Activated T-helper 1 cell treated with anti-CD3 and anti-CD28 coated beads, Interleukin-12 subunit alpha, Interleukin-12 subunit beta, Interleukin-2, Interleukin-4 antibody, amounts not matched to agents 30 ng/mL and 10 ng/mL and 1 ng/mL, durations not matched to agents 14 hours and 24 hours and 36 hours (primary cell): ENCODE measurements at regions of chr16 and their contacts with region 1.

Region 1: DNA sequence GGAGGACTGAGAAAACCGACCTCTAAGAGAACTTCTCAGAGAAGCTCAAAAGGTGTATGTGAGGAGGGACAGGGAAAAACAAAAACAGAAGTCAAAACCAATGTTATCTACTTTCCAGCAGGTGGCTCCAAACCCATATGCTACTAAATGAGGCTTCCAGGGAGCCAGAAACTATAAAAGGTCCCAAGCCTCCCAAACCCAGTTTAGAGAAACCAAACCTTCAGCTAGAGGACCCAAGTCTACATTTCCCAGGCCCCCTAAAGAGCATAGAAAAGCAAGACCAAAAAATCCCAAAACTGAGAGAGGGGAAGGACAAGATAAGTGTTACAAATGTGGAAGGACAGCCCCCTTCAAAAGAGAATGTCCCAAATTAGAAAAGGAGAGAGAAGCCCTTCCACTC is 3.7 kb downstream of the HPR start:
- DNase-seq: no peak
- H3K4me3 Mint-ChIP-seq: no peak overlapping the region
- H3K27ac Mint-ChIP-seq: no peak overlapping the region
- H3K4me1 Mint-ChIP-seq: no peaks in the 10 kb centered on the region
- H3K27me3 Mint-ChIP-seq: peaks cover 3% of the 10 kb centered on the region

Region 2: GRCh38 chr16:71746442-71747046 is 320.2 kb before region 1 on chr16:
- intact Hi-C with region 1: no loop called
- DNase-seq: no peak
- H3K4me3 Mint-ChIP-seq: no peak overlapping the region
- H3K27ac Mint-ChIP-seq: no peak overlapping the region
- H3K4me1 Mint-ChIP-seq: peaks cover 5% of the 10 kb centered on the region
- H3K27me3 Mint-ChIP-seq: no peaks in the 10 kb centered on the region

Region 3: GRCh38 chr16:71867939-71868338 is 198.8 kb before region 1 on chr16:
- intact Hi-C with region 1: no loop called
- DNase-seq: no peak
- H3K4me3 Mint-ChIP-seq: no peak overlapping the region
- H3K27ac Mint-ChIP-seq: no peak overlapping the region
- H3K4me1 Mint-ChIP-seq: peaks cover 17% of the 10 kb centered on the region
- H3K27me3 Mint-ChIP-seq: peaks cover 2% of the 10 kb centered on the region

Region 4: GRCh38 chr16:72050769-72051464 is 15.8 kb before region 1 on chr16:
- intact Hi-C with region 1: loop called (anchors 1 kb)
- DNase-seq: no peak
- H3K4me3 Mint-ChIP-seq: no peak overlapping the region
- H3K27ac Mint-ChIP-seq: no peak overlapping the region
- H3K4me1 Mint-ChIP-seq: no peaks in the 10 kb centered on the region
- H3K27me3 Mint-ChIP-seq: no peaks in the 10 kb centered on the region

Region 5: GRCh38 chr16:72099377-72099818 is 32.7 kb after region 1 on chr16:
- intact Hi-C with region 1: loop called (anchors 1 kb)
- DNase-seq: peak; percentile 35
- H3K4me3 Mint-ChIP-seq: no peak overlapping the region
- H3K27ac Mint-ChIP-seq: no peak overlapping the region
- H3K4me1 Mint-ChIP-seq: peaks cover 32% of the 10 kb centered on the region
- H3K27me3 Mint-ChIP-seq: no peaks in the 10 kb centered on the region

Region 6: DNA sequence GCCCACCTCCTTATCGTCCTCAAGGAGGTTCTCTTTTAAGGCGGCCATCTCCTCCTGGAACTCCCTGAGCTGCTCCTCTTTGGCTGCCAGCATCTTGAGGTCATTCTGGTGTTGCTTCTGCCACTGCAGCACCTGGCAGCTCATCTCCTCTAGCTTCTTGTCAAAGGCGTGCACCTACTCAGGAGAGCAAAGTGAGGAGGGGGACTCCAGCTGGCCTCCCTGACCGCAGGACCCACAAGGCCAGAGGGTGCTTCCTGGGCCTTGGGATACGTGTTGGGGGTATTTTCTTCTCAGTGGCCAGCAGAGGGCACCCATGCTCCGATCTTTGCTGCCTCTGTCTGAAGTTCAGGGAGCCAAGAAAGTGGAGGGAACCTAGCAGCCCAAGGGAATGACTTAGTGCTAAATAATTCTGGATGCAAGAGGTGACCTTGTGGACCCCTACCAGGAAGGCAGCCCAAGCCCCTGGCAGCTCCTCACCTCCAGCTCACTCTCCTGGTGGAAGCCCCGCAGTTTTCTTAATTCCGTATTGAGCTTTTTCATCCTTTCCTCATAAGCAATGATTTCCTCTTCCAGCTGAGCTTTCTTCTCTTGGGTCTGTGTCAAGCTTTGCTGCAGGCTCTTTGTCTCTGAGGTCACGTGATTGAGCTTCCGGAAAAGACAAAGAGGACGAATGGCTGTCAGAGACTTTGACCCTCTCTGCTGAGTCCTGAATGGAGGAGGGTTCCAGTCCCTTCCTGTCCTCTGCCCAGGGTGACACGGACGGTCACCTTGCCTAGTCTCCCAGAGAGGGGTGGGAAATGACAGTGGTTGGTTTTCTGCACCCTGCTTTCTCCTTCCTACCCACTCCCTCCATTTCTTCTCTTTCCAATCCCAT is 58.3 kb after region 1 on chr16:
- intact Hi-C with region 1: no loop called
- DNase-seq: peak; percentile 39
- H3K4me3 Mint-ChIP-seq: no peak overlapping the region
- H3K27ac Mint-ChIP-seq: no peak overlapping the region
- H3K4me1 Mint-ChIP-seq: no peaks in the 10 kb centered on the region
- H3K27me3 Mint-ChIP-seq: peaks cover 9% of the 10 kb centered on the region